HEK293 (cell line): ENCODE measurements at regions of chr19 and their contacts with region 1.

Region 1: GRCh38 chr19:6021878-6022569 is 44.1 kb upstream of the RANBP3 start:
- H3K4me3 ChIP-seq: no peak overlapping the region
- H3K27ac ChIP-seq: no peak overlapping the region
- H3K4me1 ChIP-seq: no peaks in the 10 kb centered on the region
- CTCF ChIP-seq: peak; percentile 84; the same call in 1 of the 2 replicates

Region 2: DNA sequence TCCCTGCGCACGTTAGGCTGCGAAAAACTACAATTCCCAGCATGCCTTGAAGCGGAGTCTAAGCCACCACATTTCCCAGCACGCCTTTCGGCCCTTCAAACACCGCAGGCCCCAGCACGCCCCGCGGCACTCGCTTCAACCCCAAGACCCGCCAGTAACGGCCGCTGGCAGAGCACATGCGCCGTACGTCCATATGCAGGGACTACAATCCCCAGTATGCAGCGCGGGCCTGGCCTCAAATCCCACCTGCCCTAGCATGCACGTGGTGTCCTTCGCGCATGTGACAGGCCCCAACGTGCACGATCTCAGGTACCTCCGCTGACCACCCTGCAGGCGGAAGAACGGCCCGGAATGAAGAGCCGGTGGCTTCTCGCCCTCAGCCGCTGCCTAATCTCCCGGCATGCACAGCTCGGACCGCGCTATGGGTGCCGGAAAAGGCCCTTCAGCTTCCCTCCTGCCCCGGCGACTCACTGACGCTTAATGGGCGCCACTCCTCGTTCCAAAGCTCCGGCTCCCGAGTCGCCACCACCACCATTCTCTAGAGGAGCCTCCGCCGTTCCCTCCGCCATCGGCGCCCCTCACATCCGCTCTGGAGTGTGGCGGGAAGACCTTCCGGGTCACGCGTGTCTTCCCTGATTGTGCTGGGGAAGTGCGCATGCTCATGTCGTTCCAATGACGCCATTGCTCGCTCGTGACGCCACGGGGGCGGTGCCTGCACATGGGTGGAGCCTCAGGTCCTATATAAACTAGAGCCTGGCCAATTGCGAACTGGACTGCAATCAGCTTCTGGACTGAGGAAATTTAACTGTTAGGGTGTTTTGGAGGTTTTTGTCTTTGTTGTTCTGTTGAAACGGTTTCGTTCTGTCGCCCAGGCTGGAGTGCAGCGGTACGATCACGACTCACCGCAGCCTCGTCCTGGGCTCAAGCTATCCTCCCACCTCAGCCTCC is 231.2 kb before region 1 on chr19 and contains the start of gene DUS3L:
- CTCF ChIA-PET with region 1: interaction called, 10 read pairs
- POLR2A ChIA-PET with region 1: no interaction called
- H3K4me3 ChIP-seq: peak within 1 kb of the TSS; percentile 71
- H3K27ac ChIP-seq: peak within 1 kb of the TSS; percentile 82
- H3K4me1 ChIP-seq: no peaks in the 10 kb centered on the region
- CTCF ChIP-seq: peak; percentile 23

Region 3: GRCh38 chr19:5967994-5968430 is 54.0 kb before region 1 on chr19:
- CTCF ChIA-PET with region 1: interaction called, 25 read pairs
- POLR2A ChIA-PET with region 1: no interaction called
- H3K4me3 ChIP-seq: no peak overlapping the region
- H3K27ac ChIP-seq: peak overlapping the region; percentile 52
- H3K4me1 ChIP-seq: peaks cover 9% of the 10 kb centered on the region
- CTCF ChIP-seq: peak; percentile 74; the same call in 1 of the 2 replicates

Region 4: DNA sequence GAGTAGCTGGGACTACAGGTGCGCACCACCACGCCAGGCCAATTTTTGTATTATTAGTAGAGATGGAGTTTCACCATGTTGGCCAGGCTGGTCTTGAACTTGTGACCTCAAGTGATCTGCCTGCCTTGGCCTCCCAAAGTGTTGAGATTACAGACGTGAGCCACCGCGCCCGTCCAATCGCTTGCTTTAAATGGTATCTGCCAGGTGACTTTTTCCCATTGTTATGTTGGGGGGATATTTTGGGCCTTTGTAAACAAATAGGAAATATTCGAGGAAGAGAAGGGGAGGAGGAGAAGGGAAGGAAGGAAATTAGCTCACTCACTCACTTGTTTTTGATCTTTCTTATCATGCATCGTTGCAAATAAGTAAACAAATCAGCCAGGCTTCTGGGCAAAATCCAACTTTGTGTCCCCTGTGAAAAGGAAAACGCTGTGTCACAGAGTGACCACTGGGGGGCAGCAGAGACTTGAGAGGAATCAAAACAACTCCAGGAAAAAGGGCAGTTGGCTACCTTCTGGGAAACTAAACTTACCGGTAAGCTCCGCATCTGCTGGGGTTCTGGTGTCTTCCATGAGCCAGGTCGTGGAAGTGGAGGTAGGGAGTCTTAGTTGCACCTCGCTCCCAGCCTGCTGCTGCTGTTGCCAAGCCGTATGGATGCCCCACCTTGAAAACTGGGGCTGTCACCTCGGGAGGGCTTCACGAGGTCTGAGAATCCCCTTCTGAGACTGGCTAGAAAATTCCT is 34.8 kb before region 1 on chr19:
- CTCF ChIA-PET with region 1: interaction called, 146 read pairs
- POLR2A ChIA-PET with region 1: interaction called, 4 read pairs
- H3K4me3 ChIP-seq: peak overlapping the region; percentile 23
- H3K27ac ChIP-seq: no peak overlapping the region
- H3K4me1 ChIP-seq: no peaks in the 10 kb centered on the region
- CTCF ChIP-seq: peak; percentile 77

Region 5: GRCh38 chr19:6005321-6006069 is 16.5 kb before region 1 on chr19:
- CTCF ChIA-PET with region 1: interaction called, 28 read pairs
- POLR2A ChIA-PET with region 1: no interaction called
- H3K4me3 ChIP-seq: no peak overlapping the region
- H3K27ac ChIP-seq: no peak overlapping the region
- H3K4me1 ChIP-seq: no peaks in the 10 kb centered on the region
- CTCF ChIP-seq: no peak

Region 6: GRCh38 chr19:6038634-6039405 is 16.8 kb after region 1 on chr19:
- CTCF ChIA-PET with region 1: interaction called, 29 read pairs
- POLR2A ChIA-PET with region 1: no interaction called
- H3K4me3 ChIP-seq: no peak overlapping the region
- H3K27ac ChIP-seq: no peak overlapping the region
- H3K4me1 ChIP-seq: no peaks in the 10 kb centered on the region
- CTCF ChIP-seq: no peak

Region 7: GRCh38 chr19:6138066-6138465 is 116.0 kb after region 1 on chr19:
- CTCF ChIA-PET with region 1: no interaction called
- POLR2A ChIA-PET with region 1: no interaction called
- H3K4me3 ChIP-seq: no peak overlapping the region
- H3K27ac ChIP-seq: no peak overlapping the region
- H3K4me1 ChIP-seq: no peaks in the 10 kb centered on the region
- CTCF ChIP-seq: no peak